ENCODE measurements at regions of chr12 and their contacts with region 1.

Region 1: DNA sequence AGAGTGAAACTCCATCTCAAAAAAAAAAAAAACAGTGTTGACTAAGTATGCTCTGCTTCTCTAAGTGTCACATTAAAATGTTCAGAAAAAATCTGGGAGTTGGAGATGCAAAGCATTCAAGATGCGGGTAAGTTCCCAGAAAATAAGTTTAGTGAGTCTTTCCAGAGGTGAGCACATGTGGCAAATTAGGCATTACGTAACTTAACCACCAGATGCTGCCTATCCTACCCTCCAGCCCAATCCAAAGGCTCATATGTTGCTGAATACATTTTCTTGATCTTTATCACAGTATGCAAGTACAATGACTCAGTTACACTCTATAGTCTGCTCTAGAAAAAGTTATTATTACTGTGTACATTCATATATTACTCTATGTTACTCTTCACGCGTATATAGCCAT is 3.6 kb downstream of the SLC2A14 start:
- DNase-seq: peak; percentile 22
- H3K4me3 ChIP-seq: no peak overlapping the region
- H3K27me3 ChIP-seq: peaks cover 5% of the 10 kb centered on the region
- CTCF ChIP-seq: no peak

Region 2: GRCh38 chr12:8032242-8033152 is 163.4 kb after region 1 on chr12 and contains the start of gene FOXJ2:
- CTCF ChIA-PET with region 1: no interaction called
- POLR2A ChIA-PET with region 1: interaction called, 32 read pairs
- DNase-seq: no peak
- H3K4me3 ChIP-seq: peak within 1 kb of the TSS; percentile 85
- H3K27me3 ChIP-seq: no peaks in the 10 kb centered on the region
- CTCF ChIP-seq: peak; percentile 20; the same call in 1 of the 2 replicates
- polyA plus RNA-seq, gene FOXJ2: 5.3 and 6.5 TPM in 2 replicates